ENCODE measurements at regions of chr16 and their contacts with region 1.

Region 1: DNA sequence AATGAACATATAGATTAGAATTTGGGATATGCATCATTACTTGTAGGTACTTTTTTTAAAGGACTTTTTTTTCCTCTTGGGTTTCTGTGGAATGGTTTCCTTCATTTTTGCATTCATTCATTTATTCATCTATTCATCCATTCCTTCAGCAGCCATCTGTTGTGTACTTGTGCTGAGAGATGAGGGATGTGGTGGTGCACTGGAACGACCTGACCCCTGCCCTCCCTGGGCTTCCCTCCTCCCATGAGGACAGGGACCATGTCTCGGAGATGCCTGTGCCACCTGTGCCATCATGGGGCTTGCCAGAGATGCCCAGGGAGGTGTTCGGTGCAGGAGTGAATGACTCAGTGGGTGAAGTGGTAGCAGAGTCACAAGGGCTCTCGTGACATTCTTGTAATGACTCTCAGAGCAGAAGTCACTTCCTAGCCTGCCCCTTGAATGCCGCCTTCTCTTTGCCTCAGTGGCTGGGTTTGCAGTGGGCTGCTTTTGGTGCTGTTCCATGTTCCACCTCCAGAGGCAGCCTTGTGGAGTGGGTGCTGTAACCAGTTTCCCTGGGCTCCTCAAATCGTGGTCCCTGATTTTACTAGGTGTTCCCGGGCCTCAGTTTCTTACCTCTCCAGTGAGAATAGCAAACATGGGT is 43.9 kb downstream of the CLEC16A start:
- DNase-seq: peak; percentile 93
- H3K4me3 Mint-ChIP-seq: peak overlapping the region; percentile 33
- H3K27ac Mint-ChIP-seq: peak overlapping the region; percentile 98
- H3K4me1 Mint-ChIP-seq: peaks cover 90% of the 10 kb centered on the region
- H3K27me3 Mint-ChIP-seq: no peaks in the 10 kb centered on the region

Region 2: DNA sequence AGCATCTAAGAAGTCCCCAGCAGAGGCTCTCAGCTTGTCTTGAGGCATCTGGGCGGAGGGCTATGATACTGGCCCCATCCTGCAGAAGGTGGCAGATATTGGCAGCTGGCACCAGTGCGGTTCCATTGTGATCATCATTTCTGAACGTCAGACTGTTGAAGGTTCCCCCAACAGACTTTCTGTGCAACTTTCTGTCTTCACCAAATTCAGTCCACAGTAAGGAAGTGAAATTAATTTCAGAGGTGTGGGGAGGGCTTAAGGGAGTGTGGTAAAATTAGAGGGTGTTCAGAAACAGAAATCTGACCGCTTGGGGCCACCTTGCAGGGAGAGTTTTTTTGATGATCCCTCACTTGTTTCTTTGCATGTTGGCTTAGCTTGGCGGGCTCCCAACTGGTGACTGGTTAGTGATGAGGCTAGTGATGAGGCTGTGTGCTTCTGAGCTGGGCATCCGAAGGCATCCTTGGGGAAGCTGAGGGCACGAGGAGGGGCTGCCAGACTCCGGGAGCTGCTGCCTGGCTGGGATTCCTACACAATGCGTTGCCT is 111.4 kb before region 1 on chr16 and contains the start of gene CIITA:
- CTCF ChIA-PET with region 1: no interaction called
- POLR2A ChIA-PET with region 1: no interaction called
- intact Hi-C with region 1: no loop called
- DNase-seq: peak; percentile 80
- H3K4me3 Mint-ChIP-seq: peak within 1 kb of the TSS; percentile 75
- H3K27ac Mint-ChIP-seq: peak within 1 kb of the TSS; percentile 24
- H3K4me1 Mint-ChIP-seq: peaks cover 69% of the 10 kb centered on the region
- H3K27me3 Mint-ChIP-seq: peaks cover 68% of the 10 kb centered on the region
- total RNA-seq, gene CIITA: 1.8 to 3.2 TPM

Region 3: DNA sequence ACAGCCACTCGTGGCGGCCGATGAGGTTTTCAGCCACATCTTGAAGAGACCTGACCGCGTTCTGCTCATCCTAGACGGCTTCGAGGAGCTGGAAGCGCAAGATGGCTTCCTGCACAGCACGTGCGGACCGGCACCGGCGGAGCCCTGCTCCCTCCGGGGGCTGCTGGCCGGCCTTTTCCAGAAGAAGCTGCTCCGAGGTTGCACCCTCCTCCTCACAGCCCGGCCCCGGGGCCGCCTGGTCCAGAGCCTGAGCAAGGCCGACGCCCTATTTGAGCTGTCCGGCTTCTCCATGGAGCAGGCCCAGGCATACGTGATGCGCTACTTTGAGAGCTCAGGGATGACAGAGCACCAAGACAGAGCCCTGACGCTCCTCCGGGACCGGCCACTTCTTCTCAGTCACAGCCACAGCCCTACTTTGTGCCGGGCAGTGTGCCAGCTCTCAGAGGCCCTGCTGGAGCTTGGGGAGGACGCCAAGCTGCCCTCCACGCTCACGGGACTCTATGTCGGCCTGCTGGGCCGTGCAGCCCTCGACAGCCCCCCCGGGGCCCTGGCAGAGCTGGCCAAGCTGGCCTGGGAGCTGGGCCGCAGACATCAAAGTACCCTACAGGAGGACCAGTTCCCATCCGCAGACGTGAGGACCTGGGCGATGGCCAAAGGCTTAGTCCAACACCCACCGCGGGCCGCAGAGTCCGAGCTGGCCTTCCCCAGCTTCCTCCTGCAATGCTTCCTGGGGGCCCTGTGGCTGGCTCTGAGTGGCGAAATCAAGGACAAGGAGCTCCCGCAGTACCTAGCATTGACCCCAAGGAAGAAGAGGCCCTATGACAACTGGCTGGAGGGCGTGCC is 81.1 kb before region 1 on chr16:
- CTCF ChIA-PET with region 1: no interaction called
- POLR2A ChIA-PET with region 1: no interaction called
- intact Hi-C with region 1: no loop called
- DNase-seq: no peak
- H3K4me3 Mint-ChIP-seq: no peak overlapping the region
- H3K27ac Mint-ChIP-seq: no peak overlapping the region
- H3K4me1 Mint-ChIP-seq: no peaks in the 10 kb centered on the region
- H3K27me3 Mint-ChIP-seq: no peaks in the 10 kb centered on the region

Region 4: GRCh38 chr16:10949370-10949970 is 38.8 kb before region 1 on chr16:
- CTCF ChIA-PET with region 1: interaction called, 8 read pairs
- POLR2A ChIA-PET with region 1: no interaction called
- intact Hi-C with region 1: loop called (anchors 5 kb)
- DNase-seq: peak; percentile 69
- H3K4me3 Mint-ChIP-seq: no peak overlapping the region
- H3K27ac Mint-ChIP-seq: peak overlapping the region; percentile 42
- H3K4me1 Mint-ChIP-seq: peaks cover 56% of the 10 kb centered on the region
- H3K27me3 Mint-ChIP-seq: no peaks in the 10 kb centered on the region

Region 5: DNA sequence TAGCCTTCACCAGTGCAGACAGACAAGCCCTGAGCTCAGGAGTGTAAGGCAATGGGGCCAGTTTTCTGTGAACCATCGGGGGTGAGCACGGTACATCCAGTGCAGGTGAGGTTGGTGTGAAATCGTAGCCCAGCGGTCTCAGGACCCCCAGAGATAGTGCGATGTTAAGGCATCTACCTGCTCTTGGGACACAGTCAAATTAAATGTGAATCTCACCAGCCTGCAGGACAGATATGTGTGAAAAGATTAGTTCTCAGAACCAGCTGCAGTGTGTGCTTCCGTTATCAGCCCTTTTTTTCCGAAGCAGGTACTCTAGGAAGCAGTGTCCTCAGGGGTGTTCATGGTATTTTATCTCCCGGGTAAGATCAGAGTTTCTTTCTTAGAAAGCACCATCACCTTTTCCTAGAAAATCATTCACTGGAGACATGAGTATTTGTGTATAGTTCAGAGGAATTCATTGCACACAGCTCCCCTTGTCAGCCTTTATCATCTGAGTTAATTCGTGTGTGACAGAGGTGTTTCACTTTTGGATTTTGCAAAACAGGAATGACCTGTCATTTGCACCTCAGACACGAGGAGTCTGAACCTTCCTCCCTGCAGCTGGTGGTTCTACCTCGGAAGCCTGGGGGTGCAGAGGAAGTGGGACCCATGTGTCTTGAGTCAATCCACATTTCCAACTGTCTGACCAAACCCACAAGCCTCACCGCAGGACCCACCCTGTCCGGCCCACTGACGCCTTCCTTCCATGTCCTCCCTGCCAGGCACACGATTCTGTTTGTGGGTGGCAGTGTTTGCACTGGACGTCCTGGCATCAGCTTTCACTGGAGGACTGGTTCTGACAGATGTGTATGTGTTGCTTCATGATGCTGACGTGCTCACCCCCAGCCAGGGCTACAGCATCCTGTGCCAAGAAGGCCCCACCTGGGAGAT is 63.9 kb after region 1 on chr16:
- CTCF ChIA-PET with region 1: interaction called, 7 read pairs
- POLR2A ChIA-PET with region 1: interaction called, 7 read pairs
- intact Hi-C with region 1: loop called (anchors 1 kb)
- DNase-seq: peak; percentile 94
- H3K4me3 Mint-ChIP-seq: peak overlapping the region; percentile 24
- H3K27ac Mint-ChIP-seq: peak overlapping the region; percentile 94
- H3K4me1 Mint-ChIP-seq: peaks cover 64% of the 10 kb centered on the region
- H3K27me3 Mint-ChIP-seq: no peaks in the 10 kb centered on the region

Region 6: GRCh38 chr16:11094072-11094856 is 106.0 kb after region 1 on chr16:
- CTCF ChIA-PET with region 1: interaction called, 10 read pairs
- POLR2A ChIA-PET with region 1: interaction called, 4 read pairs
- intact Hi-C with region 1: loop called (anchors 1 kb)
- DNase-seq: peak; percentile 87
- H3K4me3 Mint-ChIP-seq: peak overlapping the region; percentile 49
- H3K27ac Mint-ChIP-seq: peak overlapping the region; percentile 98
- H3K4me1 Mint-ChIP-seq: peaks cover 82% of the 10 kb centered on the region
- H3K27me3 Mint-ChIP-seq: no peaks in the 10 kb centered on the region

Region 7: GRCh38 chr16:11164482-11165270 is 176.4 kb after region 1 on chr16:
- CTCF ChIA-PET with region 1: interaction called, 5 read pairs
- POLR2A ChIA-PET with region 1: interaction called, 3 read pairs
- intact Hi-C with region 1: loop called (anchors 2 kb)
- DNase-seq: no peak
- H3K4me3 Mint-ChIP-seq: no peak overlapping the region
- H3K27ac Mint-ChIP-seq: peak overlapping the region; percentile 24
- H3K4me1 Mint-ChIP-seq: peaks cover 26% of the 10 kb centered on the region
- H3K27me3 Mint-ChIP-seq: no peaks in the 10 kb centered on the region

Region 8: GRCh38 chr16:11224096-11224893 is 236.0 kb after region 1 on chr16:
- CTCF ChIA-PET with region 1: interaction called, 8 read pairs
- POLR2A ChIA-PET with region 1: interaction called, 6 read pairs
- intact Hi-C with region 1: loop called (anchors 1 kb)
- DNase-seq: peak; percentile 88
- H3K4me3 Mint-ChIP-seq: peak overlapping the region; percentile 71
- H3K27ac Mint-ChIP-seq: peak overlapping the region; percentile 99
- H3K4me1 Mint-ChIP-seq: peaks cover 56% of the 10 kb centered on the region
- H3K27me3 Mint-ChIP-seq: no peaks in the 10 kb centered on the region

Region 9: GRCh38 chr16:11356573-11357331 is 368.5 kb after region 1 on chr16:
- CTCF ChIA-PET with region 1: interaction called, 6 read pairs
- POLR2A ChIA-PET with region 1: no interaction called
- intact Hi-C with region 1: loop called (anchors 1 kb)
- DNase-seq: peak; percentile 73
- H3K4me3 Mint-ChIP-seq: peak overlapping the region; percentile 13
- H3K27ac Mint-ChIP-seq: peak overlapping the region; percentile 18
- H3K4me1 Mint-ChIP-seq: peaks cover 58% of the 10 kb centered on the region
- H3K27me3 Mint-ChIP-seq: peaks cover 28% of the 10 kb centered on the region

Measured in activated CD4-positive, alpha-beta memory T cell treated with anti-CD3 and anti-CD28 coated beads for 36 hours (primary cell).